Posterior vena cava (tissue), 2 donors: ENCODE measurements at regions of chr12 and their contacts with region 1.

Region 1: DNA sequence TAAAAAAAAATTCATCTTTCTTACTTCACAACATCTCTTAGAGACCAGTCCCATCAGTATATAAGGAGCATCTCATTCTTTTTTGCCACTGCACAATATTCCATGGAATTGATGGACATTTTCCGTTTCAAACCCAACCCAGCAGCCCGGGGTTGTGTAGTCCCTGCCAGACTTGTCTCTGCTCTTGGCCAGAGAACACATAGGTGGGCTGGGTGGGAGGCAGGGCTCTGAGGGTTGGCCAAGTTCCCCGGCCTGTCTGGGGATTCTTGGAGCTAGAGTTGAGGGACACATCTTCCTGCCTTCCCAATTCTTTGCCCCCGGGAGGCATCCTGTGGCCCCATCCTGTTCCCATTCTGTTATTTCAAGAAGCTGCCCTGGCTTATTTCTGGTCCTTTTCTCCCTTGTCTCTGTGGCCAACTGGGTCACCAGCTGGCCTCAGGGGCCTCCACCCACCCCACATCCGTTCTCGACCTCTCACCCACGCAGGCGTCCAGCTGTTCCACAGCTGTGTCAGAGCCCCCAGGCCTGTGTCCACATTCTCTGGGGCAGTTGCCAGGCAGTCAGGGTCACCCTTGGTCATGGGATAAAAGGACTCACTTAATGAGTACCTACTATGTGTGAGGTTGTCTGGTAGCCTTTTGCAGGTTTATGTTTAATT is 52.0 kb upstream of the CCDC63 start:
- DNase-seq: no peak

Region 2: GRCh38 chr12:110543252-110543959 is 251.3 kb before region 1 on chr12:
- intact Hi-C with region 1: no loop called
- DNase-seq: peak; percentile 91

Region 3: GRCh38 chr12:110809149-110809548 is 14.4 kb after region 1 on chr12:
- intact Hi-C with region 1: loop called in 1 of 2 experiments (anchors 2 kb)
- DNase-seq: no peak